ENCODE measurements at regions of chr3 and their contacts with region 1.

Region 1: DNA sequence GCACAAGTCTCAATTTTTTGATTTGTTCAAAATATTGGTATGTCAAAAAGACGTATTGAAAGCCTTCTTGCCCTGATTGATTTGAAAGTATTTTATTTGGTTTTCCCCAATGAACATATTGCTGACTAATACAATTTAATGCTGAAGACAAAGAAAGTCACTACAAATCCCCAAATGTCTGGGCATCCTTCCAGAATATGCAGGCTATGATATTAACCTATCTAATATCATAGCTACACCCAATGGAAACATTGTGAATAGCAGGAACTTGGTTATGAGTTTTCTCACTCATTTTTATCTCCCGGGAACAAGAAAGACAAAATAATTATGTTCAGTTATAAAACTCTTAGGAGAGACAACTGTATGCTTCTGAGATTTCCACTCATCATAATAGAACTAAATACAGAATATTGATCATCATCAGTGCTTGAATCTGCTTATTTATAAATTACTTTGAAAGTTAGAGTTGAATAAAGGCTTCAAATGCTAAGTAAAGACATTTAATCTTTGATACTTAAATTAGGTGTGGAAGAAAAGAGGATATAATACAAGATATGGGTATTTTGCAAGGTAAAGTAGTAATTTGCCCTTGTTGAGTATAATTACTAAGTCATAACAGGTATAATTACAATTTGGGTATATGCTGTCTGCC is 483.9 kb downstream of the RBMS3 start:
- DNase-seq: no peak
- H3K4me3 ChIP-seq: no peak overlapping the region
- H3K27ac ChIP-seq: no peak overlapping the region
- H3K4me1 ChIP-seq: peaks cover 0 to 14% (median 0%) of the 10 kb centered on the region in 4 donors
- H3K27me3 ChIP-seq: no peaks in the 10 kb centered on the region
- CTCF ChIP-seq: peak in 4 of 5 experiments; percentile 29 to 48 (median 38)
- EP300 ChIP-seq: no peak
- POLR2A ChIP-seq: no peak

Region 2: DNA sequence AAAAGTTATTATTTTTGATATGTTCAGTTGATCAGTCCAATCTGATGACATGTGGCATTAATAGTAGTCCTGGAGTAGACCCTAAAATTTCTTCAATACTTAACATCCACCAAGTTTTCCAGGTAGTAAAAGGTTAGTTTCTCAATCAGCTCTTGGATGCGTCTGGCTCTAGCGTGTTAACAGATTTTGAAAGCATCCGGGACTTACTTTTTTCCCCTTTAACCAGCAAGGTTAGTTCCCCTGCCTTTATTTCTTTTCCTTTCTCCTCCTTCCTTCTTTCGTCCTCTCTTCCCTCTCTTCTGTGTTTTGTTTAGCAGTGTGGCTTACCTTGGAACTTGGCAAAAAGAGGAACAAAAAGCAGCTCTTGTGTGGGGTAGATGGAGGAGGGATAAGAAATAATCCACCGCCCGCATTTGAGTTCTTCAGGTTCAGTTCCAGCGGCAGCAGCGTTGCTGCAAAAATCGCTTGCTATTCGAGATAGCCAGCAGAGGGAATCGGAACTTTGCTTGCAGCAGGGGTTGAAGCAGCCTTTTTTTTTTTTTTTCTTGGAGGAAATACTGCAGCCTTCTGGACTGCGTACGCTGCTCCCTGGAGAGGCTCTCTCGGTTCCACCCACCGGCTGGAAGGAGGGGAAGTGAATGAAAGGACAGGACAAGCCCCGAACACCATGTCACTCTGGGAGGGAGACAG is 484.2 kb before region 1 on chr3 and contains the start of gene RBMS3:
- in situ Hi-C with region 1: loop called in 1 of 4 experiments (anchors 25 kb)
- intact Hi-C with region 1: no loop called
- DNase-seq: peak; percentile 75
- H3K4me3 ChIP-seq: peak within 1 kb of the TSS; percentile 28 to 49 (median 35)
- H3K27ac ChIP-seq: peak within 1 kb of the TSS; percentile 78 to 87 (median 80)
- H3K4me1 ChIP-seq: peaks cover 0 to 6% (median 2%) of the 10 kb centered on the region in 4 donors
- H3K27me3 ChIP-seq: no peaks in the 10 kb centered on the region
- CTCF ChIP-seq: peak; percentile 15 to 54 (median 36)
- EP300 ChIP-seq: no peak
- POLR2A ChIP-seq: peak; percentile 67
- total RNA-seq, gene RBMS3: 3.8 to 18.7 (median 14.6) TPM